ENCODE measurements at regions of chr2 and their contacts with region 1.

Region 1: DNA sequence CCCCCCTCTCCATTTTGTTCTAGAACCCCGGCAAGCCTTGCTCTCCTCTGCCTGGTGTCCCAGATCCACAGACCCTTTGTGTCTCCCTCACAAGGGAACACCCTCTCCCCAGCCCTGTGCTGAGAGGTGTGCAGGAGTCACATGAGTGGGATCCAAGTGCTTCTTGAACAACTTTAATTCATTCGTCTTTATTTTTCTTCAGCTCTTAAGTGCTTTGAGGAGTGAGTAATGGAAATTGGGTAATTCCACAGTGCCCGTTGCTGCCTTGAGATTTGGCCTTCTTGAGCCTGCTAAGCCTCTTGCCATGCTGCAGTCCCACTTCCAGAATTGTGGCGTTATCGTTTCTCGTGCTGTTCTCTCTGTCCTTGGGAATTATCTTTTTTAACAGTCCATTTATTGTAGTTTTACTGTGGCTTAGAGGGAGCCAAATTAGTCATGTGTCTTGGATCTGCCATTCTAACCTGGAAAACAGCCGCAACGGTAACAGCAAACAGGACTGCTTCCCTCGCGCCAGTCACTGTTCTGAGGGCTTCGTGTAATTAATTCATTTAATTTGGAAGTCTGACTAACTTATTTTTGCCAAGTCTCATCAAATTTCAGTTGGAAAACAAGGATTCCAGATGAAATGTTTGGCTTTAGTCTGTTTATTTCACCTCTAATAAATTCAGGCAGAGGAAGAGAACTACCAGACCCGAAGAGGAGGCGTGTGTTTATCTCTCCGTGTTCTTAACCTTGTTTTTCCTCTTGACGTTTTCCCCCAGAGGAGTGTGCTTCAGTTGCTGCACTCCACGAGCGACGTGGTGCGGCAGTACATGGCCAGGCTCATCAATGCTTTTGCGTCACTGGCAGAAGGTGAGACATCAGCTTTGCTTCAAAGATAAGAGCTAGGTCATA is 72.0 kb downstream of the ARMC9 start:
- DNase-seq: peak; percentile 94
- H3K4me3 ChIP-seq: peak overlapping the region in 3 of 4 donors; percentile 1 to 34 (median 6)
- H3K27ac ChIP-seq: peak overlapping the region in 3 of 4 donors; percentile 85 to 91 (median 85)
- H3K4me1 ChIP-seq: peaks cover 0 to 39% (median 23%) of the 10 kb centered on the region in 4 donors
- H3K27me3 ChIP-seq: no peaks in the 10 kb centered on the region
- CTCF ChIP-seq: no peak
- EP300 ChIP-seq: peak; percentile 73 to 88 (median 82)
- POLR2A ChIP-seq: no peak

Region 2: GRCh38 chr2:231191896-231192872 is 78.3 kb before region 1 on chr2:
- intact Hi-C with region 1: loop called (anchors 2 kb)
- DNase-seq: peak; percentile 97
- H3K4me3 ChIP-seq: no peak overlapping the region
- H3K27ac ChIP-seq: peak overlapping the region; percentile 86 to 97 (median 90)
- H3K4me1 ChIP-seq: peaks cover 0 to 40% (median 37%) of the 10 kb centered on the region in 4 donors
- H3K27me3 ChIP-seq: no peaks in the 10 kb centered on the region
- CTCF ChIP-seq: peak; percentile 53 to 76 (median 66)
- EP300 ChIP-seq: peak; percentile 52 to 93 (median 69)
- POLR2A ChIP-seq: no peak

Region 3: GRCh38 chr2:231227309-231228162 is 42.9 kb before region 1 on chr2:
- intact Hi-C with region 1: loop called (anchors 2 kb)
- DNase-seq: peak; percentile 88
- H3K4me3 ChIP-seq: no peak overlapping the region
- H3K27ac ChIP-seq: peak overlapping the region; percentile 69 to 89 (median 82)
- H3K4me1 ChIP-seq: peaks cover 0 to 64% (median 49%) of the 10 kb centered on the region in 4 donors
- H3K27me3 ChIP-seq: no peaks in the 10 kb centered on the region
- CTCF ChIP-seq: peak; percentile 75 to 93 (median 84)
- EP300 ChIP-seq: no peak
- POLR2A ChIP-seq: no peak

Region 4: GRCh38 chr2:231290321-231291015 is 20.0 kb after region 1 on chr2:
- intact Hi-C with region 1: no loop called
- DNase-seq: no peak
- H3K4me3 ChIP-seq: no peak overlapping the region
- H3K27ac ChIP-seq: no peak overlapping the region
- H3K4me1 ChIP-seq: no peaks in the 10 kb centered on the region
- H3K27me3 ChIP-seq: no peaks in the 10 kb centered on the region
- CTCF ChIP-seq: no peak
- EP300 ChIP-seq: no peak
- POLR2A ChIP-seq: no peak

Region 5: GRCh38 chr2:231503766-231504165 is 233.3 kb after region 1 on chr2:
- intact Hi-C with region 1: no loop called
- DNase-seq: no peak
- H3K4me3 ChIP-seq: no peak overlapping the region
- H3K27ac ChIP-seq: no peak overlapping the region
- H3K4me1 ChIP-seq: no peaks in the 10 kb centered on the region
- H3K27me3 ChIP-seq: no peaks in the 10 kb centered on the region
- CTCF ChIP-seq: no peak
- EP300 ChIP-seq: no peak
- POLR2A ChIP-seq: no peak

Region 6: DNA sequence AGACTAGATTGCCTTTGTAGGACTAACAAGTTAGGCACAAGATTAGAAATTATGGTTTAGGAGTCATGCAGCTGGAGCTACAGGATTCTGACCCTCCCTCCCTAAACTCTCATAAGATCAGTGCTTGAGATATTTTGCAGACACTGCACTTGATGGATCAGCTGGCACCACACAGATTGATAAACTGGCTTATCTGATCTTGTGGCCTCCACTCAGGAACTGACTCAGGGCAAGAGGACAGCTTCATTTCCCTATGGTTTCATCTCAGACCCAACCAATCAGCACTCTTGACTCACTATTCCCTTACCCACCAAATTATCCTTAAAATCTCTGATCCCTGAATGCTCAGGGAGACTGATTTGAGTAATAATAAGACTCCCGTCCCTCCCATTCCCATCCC is 843.4 kb after region 1 on chr2:
- intact Hi-C with region 1: no loop called
- DNase-seq: no peak
- H3K4me3 ChIP-seq: no peak overlapping the region
- H3K27ac ChIP-seq: no peak overlapping the region
- H3K4me1 ChIP-seq: no peaks in the 10 kb centered on the region
- H3K27me3 ChIP-seq: no peaks in the 10 kb centered on the region
- CTCF ChIP-seq: no peak
- EP300 ChIP-seq: no peak
- POLR2A ChIP-seq: no peak